ENCODE measurements at regions of chr5 and their contacts with region 1.

Region 1: GRCh38 chr5:111278845-111279504 is 54.8 kb downstream of the CAMK4 start:
- DNase-seq: peak; percentile 79 to 93 (median 86)
- ATAC-seq: peak; percentile 98
- H3K4me3 ChIP-seq: no peak overlapping the region
- H3K4me3 Mint-ChIP-seq: peak overlapping the region; percentile 63
- H3K27ac ChIP-seq: no peak overlapping the region
- H3K27ac Mint-ChIP-seq: peak overlapping the region; percentile 59
- H3K4me1 ChIP-seq: peaks cover 11% of the 10 kb centered on the region
- H3K4me1 Mint-ChIP-seq: peaks cover 87% of the 10 kb centered on the region
- H3K27me3 ChIP-seq: no peaks in the 10 kb centered on the region
- H3K27me3 Mint-ChIP-seq: no peaks in the 10 kb centered on the region
- CTCF ChIP-seq: peak; percentile 85

Region 2: DNA sequence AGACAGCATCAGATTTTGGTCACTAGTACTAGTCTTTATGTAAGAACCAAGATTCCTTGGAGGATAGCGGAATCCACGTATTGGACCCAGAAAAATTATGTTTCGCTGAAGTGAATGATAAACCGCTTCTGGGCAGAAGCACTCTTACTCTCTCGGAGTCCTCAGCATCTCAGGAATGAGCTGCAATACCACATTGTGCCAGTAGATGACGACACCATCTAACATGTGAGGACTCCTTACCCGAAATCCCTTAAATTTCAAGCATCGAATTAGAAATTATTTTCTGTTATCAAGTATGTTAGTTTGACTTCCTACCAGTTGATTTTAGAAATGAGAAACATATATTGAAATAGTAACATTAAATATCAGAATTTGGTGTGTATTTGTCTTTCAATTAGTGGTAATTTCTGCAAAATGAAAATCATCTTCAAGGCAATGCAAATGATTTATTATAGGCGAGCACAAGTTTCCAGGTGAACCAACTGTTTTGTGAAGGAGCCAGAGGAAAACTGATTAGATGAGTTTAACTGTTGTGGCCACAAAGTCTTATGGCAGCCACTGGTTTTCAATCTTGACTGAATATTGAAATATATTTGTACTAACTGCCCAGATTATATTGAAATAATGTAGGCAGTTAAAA is 120.8 kb before region 1 on chr5:
- CTCF ChIA-PET with region 1: interaction called, 61 read pairs
- POLR2A ChIA-PET with region 1: interaction called, 8 read pairs
- intact Hi-C with region 1: loop called (anchors 1 kb)
- DNase-seq: peak; percentile 60 to 90 (median 76)
- ATAC-seq: peak; percentile 88
- H3K4me3 ChIP-seq: no peak overlapping the region
- H3K4me3 Mint-ChIP-seq: no peak overlapping the region
- H3K27ac ChIP-seq: no peak overlapping the region
- H3K27ac Mint-ChIP-seq: no peak overlapping the region
- H3K4me1 ChIP-seq: no peaks in the 10 kb centered on the region
- H3K4me1 Mint-ChIP-seq: peaks cover 11% of the 10 kb centered on the region
- H3K27me3 ChIP-seq: no peaks in the 10 kb centered on the region
- H3K27me3 Mint-ChIP-seq: no peaks in the 10 kb centered on the region
- CTCF ChIP-seq: peak; percentile 100

Region 3: DNA sequence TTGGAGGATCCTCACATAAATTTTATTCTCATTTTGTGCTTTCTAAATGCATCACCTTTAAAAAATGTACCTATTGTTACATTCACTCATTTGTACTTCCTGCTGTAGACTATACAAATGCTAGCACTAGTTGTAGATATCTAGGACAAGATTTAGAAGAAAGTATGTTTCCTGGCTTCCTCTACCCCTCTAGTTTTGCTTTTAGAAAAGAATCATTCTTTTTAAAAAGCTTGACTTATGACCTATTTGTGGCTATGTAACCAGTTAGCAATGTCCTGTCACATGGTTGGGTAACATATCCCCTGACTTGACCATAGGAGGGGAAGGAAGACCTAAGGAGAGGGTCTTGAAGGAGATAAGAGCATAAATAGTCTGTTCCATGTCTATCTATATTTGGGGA is 41.5 kb before region 1 on chr5:
- CTCF ChIA-PET with region 1: interaction called, 15 read pairs
- POLR2A ChIA-PET with region 1: interaction called, 42 read pairs
- intact Hi-C with region 1: no loop called
- DNase-seq: peak in 1 of 14 experiments; percentile 46
- ATAC-seq: no peak
- H3K4me3 ChIP-seq: peak overlapping the region; percentile 9
- H3K4me3 Mint-ChIP-seq: peak overlapping the region; percentile 80
- H3K27ac ChIP-seq: peak overlapping the region; percentile 62 to 75
- H3K27ac Mint-ChIP-seq: peak overlapping the region; percentile 90
- H3K4me1 ChIP-seq: peaks cover 55% of the 10 kb centered on the region
- H3K4me1 Mint-ChIP-seq: peaks cover 97% of the 10 kb centered on the region
- H3K27me3 ChIP-seq: no peaks in the 10 kb centered on the region
- H3K27me3 Mint-ChIP-seq: no peaks in the 10 kb centered on the region
- CTCF ChIP-seq: no peak

Region 4: DNA sequence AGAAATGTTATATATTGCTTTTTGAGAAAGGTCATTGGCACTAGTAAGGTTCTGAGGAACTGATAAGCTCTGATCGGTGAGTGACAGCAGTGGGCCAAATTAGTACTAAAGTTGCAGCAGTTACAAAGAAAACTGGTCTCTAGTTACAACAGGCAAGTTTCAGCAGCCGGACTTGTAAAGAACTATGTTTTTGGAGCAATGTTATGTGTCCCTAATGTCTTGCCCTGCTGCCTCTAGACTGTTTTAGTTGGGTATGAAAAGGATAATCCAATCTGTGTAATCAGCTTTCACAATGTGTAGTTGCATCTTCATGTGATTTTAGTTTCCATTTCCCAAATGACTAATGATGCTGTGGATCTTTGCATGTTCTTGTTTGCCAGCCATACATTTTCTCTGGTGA is 58.7 kb after region 1 on chr5:
- CTCF ChIA-PET with region 1: no interaction called
- POLR2A ChIA-PET with region 1: no interaction called
- intact Hi-C with region 1: loop called in 1 of 2 experiments (anchors 10 kb)
- DNase-seq: no peak
- ATAC-seq: no peak
- H3K4me3 ChIP-seq: no peak overlapping the region
- H3K4me3 Mint-ChIP-seq: peak overlapping the region; percentile 36
- H3K27ac ChIP-seq: no peak overlapping the region
- H3K27ac Mint-ChIP-seq: peak overlapping the region; percentile 80
- H3K4me1 ChIP-seq: no peaks in the 10 kb centered on the region
- H3K4me1 Mint-ChIP-seq: peaks cover 91% of the 10 kb centered on the region
- H3K27me3 ChIP-seq: no peaks in the 10 kb centered on the region
- H3K27me3 Mint-ChIP-seq: no peaks in the 10 kb centered on the region
- CTCF ChIP-seq: no peak

Region 5: GRCh38 chr5:112146323-112147226 is 867.6 kb after region 1 on chr5:
- CTCF ChIA-PET with region 1: no interaction called
- POLR2A ChIA-PET with region 1: no interaction called
- intact Hi-C with region 1: loop called in 1 of 2 experiments (anchors 5 kb)
- DNase-seq: peak; percentile 14 to 81 (median 40)
- ATAC-seq: peak; percentile 94
- H3K4me3 ChIP-seq: no peak overlapping the region
- H3K4me3 Mint-ChIP-seq: no peak overlapping the region
- H3K27ac ChIP-seq: no peak overlapping the region
- H3K27ac Mint-ChIP-seq: no peak overlapping the region
- H3K4me1 ChIP-seq: no peaks in the 10 kb centered on the region
- H3K4me1 Mint-ChIP-seq: no peaks in the 10 kb centered on the region
- H3K27me3 ChIP-seq: peaks cover 0 to under 1% of the 10 kb centered on the region in 2 experiments
- H3K27me3 Mint-ChIP-seq: peaks cover 7% of the 10 kb centered on the region
- CTCF ChIP-seq: peak; percentile 84

Region 6: DNA sequence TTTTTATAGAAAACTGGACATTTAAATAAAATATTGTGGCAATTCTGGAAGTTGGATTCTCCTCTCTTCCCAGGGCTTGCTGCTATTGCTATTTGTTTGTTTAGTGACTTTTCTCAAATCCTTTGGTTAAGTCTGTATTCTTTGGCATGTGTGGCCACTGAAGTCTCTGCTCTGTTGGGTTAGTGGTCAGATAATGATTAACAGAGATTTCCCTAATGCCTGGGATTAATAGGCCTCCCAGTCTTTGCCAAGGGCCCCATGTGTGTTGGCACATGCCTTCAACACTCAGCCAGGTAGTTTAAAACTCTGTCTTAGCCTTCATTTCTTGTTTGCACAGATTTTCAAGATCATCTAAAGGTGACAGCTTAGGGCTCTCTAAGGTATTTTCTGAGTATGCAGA is 1232.9 kb after region 1 on chr5:
- CTCF ChIA-PET with region 1: no interaction called
- POLR2A ChIA-PET with region 1: no interaction called
- intact Hi-C with region 1: no loop called
- DNase-seq: no peak
- ATAC-seq: no peak
- H3K4me3 ChIP-seq: no peak overlapping the region
- H3K4me3 Mint-ChIP-seq: no peak overlapping the region
- H3K27ac ChIP-seq: no peak overlapping the region
- H3K27ac Mint-ChIP-seq: no peak overlapping the region
- H3K4me1 ChIP-seq: no peaks in the 10 kb centered on the region
- H3K4me1 Mint-ChIP-seq: no peaks in the 10 kb centered on the region
- H3K27me3 ChIP-seq: no peaks in the 10 kb centered on the region
- H3K27me3 Mint-ChIP-seq: no peaks in the 10 kb centered on the region
- CTCF ChIP-seq: no peak

Measured in CD4-positive, alpha-beta T cell (primary cell).